WTC11 (cell line): ENCODE measurements at regions of chr10 and their contacts with region 1.

Region 1: DNA sequence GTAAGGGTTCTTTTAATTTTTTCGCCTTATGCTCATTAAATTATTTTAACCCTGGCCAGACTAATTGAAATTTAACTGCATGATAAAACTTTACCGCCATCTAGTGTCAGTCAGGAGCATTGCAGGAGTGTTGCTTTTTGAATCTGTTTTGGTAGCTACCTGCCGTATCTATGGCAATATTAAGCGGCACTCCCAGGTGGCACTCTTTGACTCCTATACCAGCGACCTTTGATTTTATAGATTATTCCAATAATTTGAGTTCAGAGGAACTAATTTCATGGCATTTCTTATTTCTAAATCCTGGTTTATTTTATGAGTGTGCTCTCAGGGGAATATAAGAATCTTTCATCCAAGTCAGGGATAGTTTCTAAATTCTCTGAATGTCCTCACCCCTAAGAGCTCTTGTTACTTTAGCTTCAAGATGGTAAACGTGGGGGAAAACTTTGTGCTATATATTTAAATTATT is 198.9 kb downstream of the REEP3 start:
- DNase-seq: peak; percentile 45
- ATAC-seq: peak; percentile 68
- H3K4me3 Mint-ChIP-seq: no peak overlapping the region
- H3K27ac Mint-ChIP-seq: no peak overlapping the region
- H3K4me1 Mint-ChIP-seq: peaks cover 49% of the 10 kb centered on the region
- H3K27me3 Mint-ChIP-seq: no peaks in the 10 kb centered on the region; the same call in 1 of the 2 replicates
- CTCF ChIP-seq: peak; percentile 95

Region 2: DNA sequence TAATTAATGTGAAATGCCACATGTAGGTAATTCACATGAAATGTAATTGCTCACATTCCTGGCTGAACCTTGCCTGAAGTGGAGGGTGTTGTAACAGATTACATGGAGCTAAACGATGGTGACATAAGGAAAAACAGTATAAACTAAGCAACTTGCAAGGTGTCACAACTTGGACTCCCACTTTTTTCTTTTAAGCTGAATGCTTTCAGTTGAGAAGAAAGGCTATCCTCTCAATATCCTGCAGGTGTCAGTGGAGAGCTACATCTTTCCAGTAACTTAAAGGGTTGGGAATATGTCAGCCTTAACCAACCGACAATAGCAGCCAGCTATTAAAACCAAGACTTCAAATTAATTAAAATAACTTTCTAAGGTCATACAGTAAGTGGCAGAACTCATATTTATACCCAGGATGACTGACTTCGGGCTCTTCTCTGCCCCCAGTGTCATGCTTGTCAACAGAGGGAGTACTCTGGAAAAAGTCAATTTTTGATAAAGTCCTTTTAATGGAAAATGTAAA is 553.3 kb before region 1 on chr10:
- CTCF ChIA-PET with region 1: interaction called, 54 read pairs
- POLR2A ChIA-PET with region 1: no interaction called
- DNase-seq: no peak
- ATAC-seq: peak; percentile 70
- H3K4me3 Mint-ChIP-seq: no peak overlapping the region
- H3K27ac Mint-ChIP-seq: no peak overlapping the region
- H3K4me1 Mint-ChIP-seq: no peaks in the 10 kb centered on the region
- H3K27me3 Mint-ChIP-seq: no peaks in the 10 kb centered on the region
- CTCF ChIP-seq: peak; percentile 38

Region 3: DNA sequence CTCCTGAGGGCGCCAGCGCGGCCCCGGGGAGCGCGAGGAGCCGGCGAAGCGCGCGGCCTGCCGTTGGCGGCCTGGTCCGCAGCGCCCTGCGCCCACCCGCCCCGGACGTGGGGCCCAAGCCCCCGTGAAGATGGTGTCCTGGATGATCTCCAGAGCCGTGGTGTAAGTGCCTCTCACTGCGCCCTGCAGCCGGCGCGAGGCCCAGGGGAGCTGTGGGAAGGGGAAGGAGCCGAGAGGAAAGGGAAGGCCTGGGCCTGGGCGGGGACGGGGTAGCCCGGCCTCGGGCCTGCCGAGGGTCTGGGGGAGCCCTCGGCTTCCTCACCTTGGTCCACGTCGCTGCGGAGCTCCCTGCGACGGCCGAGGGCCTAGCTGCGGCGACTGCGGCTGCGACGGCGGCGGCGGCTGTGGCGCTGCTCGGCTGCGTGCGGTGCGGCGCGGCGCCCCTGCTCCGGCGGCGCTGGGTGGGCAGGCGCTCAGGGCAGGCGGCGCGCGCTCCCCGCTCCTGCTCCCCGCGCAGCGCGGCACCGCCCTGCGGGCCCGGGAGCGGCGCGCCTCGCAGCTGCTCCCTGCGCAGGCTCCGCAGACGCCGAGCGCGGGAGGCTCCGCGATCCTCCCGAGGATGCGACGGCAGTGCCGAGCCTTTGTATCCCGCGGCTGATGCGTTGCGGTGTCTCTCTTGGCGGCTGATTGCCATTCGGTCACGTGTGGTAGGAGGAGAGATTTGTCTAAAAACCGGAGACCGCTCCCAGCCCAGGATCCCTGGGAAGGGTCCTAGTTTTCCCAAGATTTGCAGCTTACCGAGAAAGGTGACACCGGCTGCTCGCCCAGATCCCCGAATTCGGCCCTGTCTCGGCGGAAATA is 198.5 kb before region 1 on chr10:
- CTCF ChIA-PET with region 1: interaction called, 10 read pairs
- POLR2A ChIA-PET with region 1: interaction called, 5 read pairs
- DNase-seq: peak; percentile 75
- ATAC-seq: peak; percentile 67
- H3K4me3 Mint-ChIP-seq: peak overlapping the region; percentile 84
- H3K27ac Mint-ChIP-seq: peak overlapping the region; percentile 98
- H3K4me1 Mint-ChIP-seq: peaks cover 61% of the 10 kb centered on the region
- H3K27me3 Mint-ChIP-seq: no peaks in the 10 kb centered on the region
- CTCF ChIP-seq: no peak

Region 4: GRCh38 chr10:63534723-63535122 is 185.4 kb before region 1 on chr10:
- CTCF ChIA-PET with region 1: no interaction called
- POLR2A ChIA-PET with region 1: no interaction called
- DNase-seq: no peak
- ATAC-seq: no peak
- H3K4me3 Mint-ChIP-seq: no peak overlapping the region
- H3K27ac Mint-ChIP-seq: 0 out of 2 replicates have a peak overlapping the region, but pooled peaks have one; percentile 51
- H3K4me1 Mint-ChIP-seq: 0 out of 2 replicates have a peak, but pooled peaks cover 2% of the 10 kb centered on the region
- H3K27me3 Mint-ChIP-seq: no peaks in the 10 kb centered on the region
- CTCF ChIP-seq: no peak

Region 5: GRCh38 chr10:63670291-63670898 is 49.7 kb before region 1 on chr10:
- CTCF ChIA-PET with region 1: interaction called, 19 read pairs
- POLR2A ChIA-PET with region 1: no interaction called
- DNase-seq: no peak
- ATAC-seq: peak; percentile 65
- H3K4me3 Mint-ChIP-seq: peak overlapping the region; percentile 50
- H3K27ac Mint-ChIP-seq: peak overlapping the region; percentile 96
- H3K4me1 Mint-ChIP-seq: peaks cover 60% of the 10 kb centered on the region
- H3K27me3 Mint-ChIP-seq: no peaks in the 10 kb centered on the region
- CTCF ChIP-seq: no peak

Region 6: DNA sequence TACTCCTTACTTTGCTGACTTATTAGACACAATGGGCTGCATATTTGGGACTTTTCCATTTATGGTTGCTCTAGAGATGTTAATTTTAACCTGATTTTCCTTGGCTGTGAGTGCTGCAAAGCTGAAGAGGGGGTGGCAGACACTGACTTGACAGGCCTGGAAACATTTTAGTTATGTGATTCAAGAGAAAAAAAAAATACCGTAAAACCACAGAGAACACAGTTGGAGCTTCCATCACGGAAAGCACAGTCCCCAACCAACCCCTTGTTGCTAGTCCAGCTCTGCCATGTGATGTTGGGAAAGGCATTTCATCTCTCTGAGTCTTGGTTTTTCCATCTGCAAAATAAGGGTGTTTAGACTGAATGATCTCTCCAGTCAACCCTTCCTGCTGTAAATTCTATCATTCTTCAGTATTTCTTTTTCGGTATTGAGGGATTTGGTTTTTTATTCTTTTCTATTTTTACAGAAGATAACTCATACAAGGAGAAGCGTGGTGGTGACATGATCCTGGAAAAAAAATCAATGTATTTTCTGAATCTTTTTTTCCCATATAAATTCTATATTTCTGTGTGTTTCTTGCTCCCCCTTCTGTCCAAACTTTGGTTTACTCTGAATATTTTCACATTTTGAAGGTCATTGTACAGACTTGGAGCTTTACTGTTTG is 47.2 kb after region 1 on chr10:
- CTCF ChIA-PET with region 1: interaction called, 13 read pairs
- POLR2A ChIA-PET with region 1: no interaction called
- DNase-seq: no peak
- ATAC-seq: no peak
- H3K4me3 Mint-ChIP-seq: no peak overlapping the region
- H3K27ac Mint-ChIP-seq: no peak overlapping the region
- H3K4me1 Mint-ChIP-seq: peaks cover 12% of the 10 kb centered on the region
- H3K27me3 Mint-ChIP-seq: no peaks in the 10 kb centered on the region
- CTCF ChIP-seq: no peak

Region 7: DNA sequence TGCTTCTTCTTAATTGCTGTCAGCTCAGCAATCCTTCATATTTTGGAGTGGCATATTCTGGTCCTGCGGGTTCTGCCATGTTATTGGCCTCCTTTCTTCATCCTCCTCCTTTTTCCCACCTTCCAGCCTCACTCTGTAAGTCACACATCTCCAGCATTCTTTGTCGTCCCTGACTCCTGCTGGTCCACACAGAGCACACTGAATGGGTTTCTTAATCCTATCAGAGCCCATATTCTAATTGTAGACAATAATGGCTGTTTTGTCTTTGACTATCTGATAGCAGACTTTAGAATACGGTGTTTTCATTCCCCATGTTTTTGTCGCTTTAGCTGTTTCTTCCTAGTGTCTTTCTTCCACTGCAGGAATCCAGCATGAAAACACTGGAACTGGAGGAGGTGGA is 190.7 kb after region 1 on chr10:
- CTCF ChIA-PET with region 1: no interaction called
- POLR2A ChIA-PET with region 1: no interaction called
- DNase-seq: no peak
- ATAC-seq: peak; percentile 74
- H3K4me3 Mint-ChIP-seq: no peak overlapping the region
- H3K27ac Mint-ChIP-seq: no peak overlapping the region
- H3K4me1 Mint-ChIP-seq: peaks cover 18% of the 10 kb centered on the region
- H3K27me3 Mint-ChIP-seq: no peaks in the 10 kb centered on the region
- CTCF ChIP-seq: no peak